PC-9 (cell line): ENCODE measurements at regions of chr1 and their contacts with region 1.

Region 1: GRCh38 chr1:41573785-41574713 is 89.6 kb upstream of the EDN2 start:
- DNase-seq: peak; percentile 58 to 80
- H3K4me3 ChIP-seq: no peak overlapping the region
- H3K27ac ChIP-seq: no peak overlapping the region
- H3K4me1 ChIP-seq: peaks cover 5% of the 10 kb centered on the region
- H3K27me3 ChIP-seq: no peaks in the 10 kb centered on the region
- CTCF ChIP-seq: peak; percentile 93

Region 2: DNA sequence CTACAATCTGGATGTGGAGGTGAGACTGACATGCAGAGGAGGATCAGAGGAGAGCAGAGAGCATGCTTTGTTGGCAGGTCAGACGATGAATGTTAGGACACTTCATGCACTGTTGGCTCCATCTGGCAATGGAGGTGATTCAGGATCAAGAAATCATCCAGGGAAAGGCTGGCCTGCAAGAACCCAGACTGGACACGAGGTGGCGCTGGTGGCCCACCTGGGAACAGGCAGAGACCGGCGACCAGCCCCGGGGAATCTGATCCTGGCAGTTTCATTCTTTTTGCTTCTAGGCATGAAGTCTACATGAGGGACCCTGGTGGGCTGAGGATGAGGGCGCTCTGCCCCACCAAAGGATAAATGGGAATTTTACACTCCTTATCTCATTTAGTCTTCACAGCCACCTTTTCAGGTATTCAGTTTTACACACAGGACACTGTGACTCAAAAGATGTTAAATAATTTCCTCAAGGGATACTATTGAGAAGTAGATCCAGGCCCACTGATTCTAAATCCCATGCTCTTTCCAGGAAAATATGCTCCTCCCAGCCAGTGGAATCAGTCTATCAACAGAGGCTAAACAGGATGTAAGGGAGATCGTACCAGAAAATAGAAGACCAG is 305.8 kb before region 1 on chr1:
- CTCF ChIA-PET with region 1: no interaction called
- POLR2A ChIA-PET with region 1: no interaction called
- intact Hi-C with region 1: loop called (anchors 1 kb)
- DNase-seq: peak; percentile 50 to 81
- H3K4me3 ChIP-seq: no peak overlapping the region
- H3K27ac ChIP-seq: no peak overlapping the region
- H3K4me1 ChIP-seq: no peaks in the 10 kb centered on the region
- H3K27me3 ChIP-seq: no peaks in the 10 kb centered on the region
- CTCF ChIP-seq: peak; percentile 96

Region 3: GRCh38 chr1:41795205-41795762 is 221.2 kb after region 1 on chr1:
- CTCF ChIA-PET with region 1: interaction called, 4 read pairs
- POLR2A ChIA-PET with region 1: no interaction called
- intact Hi-C with region 1: loop called (anchors 1 kb)
- DNase-seq: no peak
- H3K4me3 ChIP-seq: no peak overlapping the region
- H3K27ac ChIP-seq: no peak overlapping the region
- H3K4me1 ChIP-seq: peaks cover 13% of the 10 kb centered on the region
- H3K27me3 ChIP-seq: no peaks in the 10 kb centered on the region
- CTCF ChIP-seq: peak; percentile 59

Region 4: DNA sequence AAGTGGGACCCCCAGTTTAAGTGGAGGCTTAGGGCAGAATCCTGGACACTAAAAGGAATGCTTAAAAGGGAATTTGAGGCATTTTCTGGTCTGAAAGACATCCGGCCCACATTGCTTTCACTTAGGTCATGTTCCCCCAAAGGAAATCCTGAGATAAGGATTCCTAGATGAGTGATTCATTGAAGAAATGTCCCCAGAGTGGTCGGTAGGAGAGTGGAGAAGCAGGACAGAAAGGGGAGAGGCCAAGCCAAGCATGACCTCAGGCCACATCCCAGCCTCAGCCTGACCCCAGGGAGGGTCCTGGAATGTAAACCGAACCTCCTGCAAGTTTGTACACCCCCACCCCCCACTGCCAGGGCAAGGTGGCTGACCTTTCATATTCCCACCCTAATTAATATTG is 328.1 kb after region 1 on chr1:
- CTCF ChIA-PET with region 1: no interaction called
- POLR2A ChIA-PET with region 1: no interaction called
- intact Hi-C with region 1: loop called (anchors 10 kb)
- DNase-seq: peak; percentile 87 to 91
- H3K4me3 ChIP-seq: peak overlapping the region; percentile 52; the same call in 1 of the 2 replicates
- H3K27ac ChIP-seq: peak overlapping the region; percentile 95
- H3K4me1 ChIP-seq: peaks cover 56% of the 10 kb centered on the region
- H3K27me3 ChIP-seq: no peaks in the 10 kb centered on the region
- CTCF ChIP-seq: no peak

Region 5: GRCh38 chr1:42035830-42036604 is 462.0 kb after region 1 on chr1:
- CTCF ChIA-PET with region 1: no interaction called
- POLR2A ChIA-PET with region 1: no interaction called
- intact Hi-C with region 1: loop called (anchors 1 kb)
- DNase-seq: peak; percentile 78 to 99
- H3K4me3 ChIP-seq: peak overlapping the region; percentile 86
- H3K27ac ChIP-seq: no peak overlapping the region
- H3K4me1 ChIP-seq: peaks cover 18% of the 10 kb centered on the region
- H3K27me3 ChIP-seq: no peaks in the 10 kb centered on the region
- CTCF ChIP-seq: no peak